Activated CD4-positive, alpha-beta memory T cell treated with anti-CD3 and anti-CD28 coated beads for 36 hours (primary cell): ENCODE measurements at regions of chr10 and their contacts with region 1.

Region 1: GRCh38 chr10:95907456-95908253 is at the start of gene CC2D2B:
- DNase-seq: peak; percentile 75
- H3K4me3 Mint-ChIP-seq: peak within 1 kb of the TSS; percentile 92
- H3K27ac Mint-ChIP-seq: peak within 1 kb of the TSS; percentile 89
- H3K4me1 Mint-ChIP-seq: peaks cover 12% of the 10 kb centered on the region
- H3K27me3 Mint-ChIP-seq: peaks cover 2% of the 10 kb centered on the region
- total RNA-seq, gene CC2D2B: 0.15 TPM in 1 of 2 experiments, not detected in the other

Region 2: GRCh38 chr10:96043033-96043932 is 135.6 kb after region 1 on chr10 and contains the start of gene CCNJ:
- CTCF ChIA-PET with region 1: no interaction called
- POLR2A ChIA-PET with region 1: no interaction called
- intact Hi-C with region 1: loop called (anchors 1 kb)
- DNase-seq: peak; percentile 88
- H3K4me3 Mint-ChIP-seq: peak within 1 kb of the TSS; percentile 90
- H3K27ac Mint-ChIP-seq: peak within 1 kb of the TSS; percentile 59
- H3K4me1 Mint-ChIP-seq: peaks cover 42% of the 10 kb centered on the region
- H3K27me3 Mint-ChIP-seq: peaks cover 5% of the 10 kb centered on the region
- total RNA-seq, gene CCNJ: 4.3 to 4.4 TPM

Region 3: GRCh38 chr10:96129387-96130325 is 222.0 kb after region 1 on chr10 and contains the start of gene ZNF518A:
- CTCF ChIA-PET with region 1: interaction called, 3 read pairs
- POLR2A ChIA-PET with region 1: no interaction called
- intact Hi-C with region 1: loop called (anchors 2 kb)
- DNase-seq: peak; percentile 91
- H3K4me3 Mint-ChIP-seq: peak within 1 kb of the TSS; percentile 92
- H3K27ac Mint-ChIP-seq: peak within 1 kb of the TSS; percentile 99
- H3K4me1 Mint-ChIP-seq: peaks cover 20% of the 10 kb centered on the region
- H3K27me3 Mint-ChIP-seq: peaks cover 29% of the 10 kb centered on the region
- total RNA-seq, gene ZNF518A: 9.6 to 13.3 TPM

Region 4: DNA sequence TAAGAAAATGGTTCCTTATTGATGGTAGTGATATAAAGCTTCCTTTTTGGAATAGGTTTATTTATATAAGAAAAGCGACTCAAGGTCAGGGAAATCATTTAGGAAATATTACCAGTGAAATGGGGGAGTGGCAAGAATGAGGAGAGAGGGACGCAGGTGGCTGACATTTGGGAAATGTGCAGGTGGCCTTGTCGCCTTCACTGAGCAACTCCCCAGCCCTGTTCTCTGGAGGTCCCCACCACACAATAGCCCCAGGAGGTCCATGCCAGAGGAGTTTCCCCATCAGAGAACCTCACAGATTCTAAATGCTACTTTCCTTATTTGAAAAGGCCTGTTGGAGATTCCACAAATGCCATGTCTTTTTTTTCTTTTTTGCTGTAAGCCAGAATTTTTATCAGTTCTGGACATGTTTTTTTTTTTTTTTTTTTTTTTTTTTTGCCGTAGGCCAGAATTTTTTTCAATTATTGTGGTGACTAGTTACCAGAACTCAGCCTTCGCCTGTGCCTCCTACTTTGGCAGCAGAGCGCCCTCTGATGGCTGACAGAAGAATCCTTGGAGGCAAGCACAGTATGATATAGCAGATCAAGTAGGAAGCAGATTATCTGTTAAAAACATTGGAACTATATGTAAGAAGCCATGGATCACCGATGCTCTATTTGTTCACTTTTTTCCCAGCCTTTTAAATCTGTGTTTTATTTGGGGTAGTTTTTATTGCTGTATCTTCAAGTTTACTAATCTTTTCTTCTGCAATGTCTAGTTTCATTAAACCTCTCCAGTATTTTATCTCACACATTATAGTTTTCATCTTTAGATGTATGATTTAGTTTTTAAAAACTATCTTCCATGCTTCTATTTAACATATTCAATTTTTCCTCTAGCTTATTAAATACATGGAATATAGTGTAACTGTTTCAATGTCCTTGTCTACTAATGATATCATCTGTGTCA is 432.6 kb after region 1 on chr10:
- CTCF ChIA-PET with region 1: no interaction called
- POLR2A ChIA-PET with region 1: no interaction called
- intact Hi-C with region 1: loop called (anchors 5 kb)
- DNase-seq: peak; percentile 71
- H3K4me3 Mint-ChIP-seq: no peak overlapping the region
- H3K27ac Mint-ChIP-seq: no peak overlapping the region
- H3K4me1 Mint-ChIP-seq: peaks cover 7% of the 10 kb centered on the region
- H3K27me3 Mint-ChIP-seq: peaks cover 11% of the 10 kb centered on the region